Right ventricle myocardium inferior (tissue), 1 donor: ENCODE measurements at regions of chr3 and their contacts with region 1.

Region 1: GRCh38 chr3:28777806-28778475 is 429.3 kb upstream of the AZI2 start:
- DNase-seq: no peak
- ATAC-seq: peak; percentile 88

Region 2: GRCh38 chr3:28667646-28668621 is 110.0 kb before region 1 on chr3:
- intact Hi-C with region 1: loop called (anchors 5 kb)
- DNase-seq: peak; percentile 70
- ATAC-seq: peak; percentile 93

Region 3: DNA sequence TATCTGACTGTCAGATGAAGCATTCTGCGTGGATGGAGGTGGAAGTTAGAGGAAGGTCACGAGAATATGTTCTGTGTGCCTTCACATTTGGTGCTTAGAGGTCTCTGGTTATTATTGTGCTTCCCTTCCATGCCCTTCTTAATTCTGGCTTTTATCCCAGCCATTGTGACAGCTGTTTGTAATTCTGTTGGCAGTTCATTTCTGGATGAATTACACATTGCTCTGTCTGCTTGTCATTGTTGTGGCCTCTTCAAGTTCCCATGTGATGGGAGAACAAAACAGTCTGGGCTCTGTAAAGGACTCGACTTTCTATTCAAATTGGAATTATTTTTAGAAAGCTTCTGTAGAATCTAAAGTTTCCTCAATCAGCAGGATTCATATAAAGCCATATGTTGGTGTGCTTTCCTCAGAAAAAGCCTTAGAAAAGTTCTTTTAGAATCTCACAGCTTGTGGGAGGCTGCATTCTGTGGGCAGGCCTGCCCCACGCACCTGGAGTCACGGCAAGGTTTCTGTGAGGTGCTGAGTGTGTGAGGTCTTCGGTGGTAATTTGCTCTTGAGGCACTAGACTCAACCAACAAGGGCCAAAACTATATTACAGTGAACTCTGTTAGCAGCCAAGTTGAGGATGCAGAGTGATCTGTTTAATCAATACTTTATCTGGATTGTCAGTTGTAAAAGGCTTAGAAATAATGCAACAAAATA is 31.9 kb before region 1 on chr3:
- intact Hi-C with region 1: loop called (anchors 1 kb)
- DNase-seq: no peak
- ATAC-seq: peak; percentile 85